H1 (cell line): ENCODE measurements at regions of chr3 and their contacts with region 1.

Region 1: DNA sequence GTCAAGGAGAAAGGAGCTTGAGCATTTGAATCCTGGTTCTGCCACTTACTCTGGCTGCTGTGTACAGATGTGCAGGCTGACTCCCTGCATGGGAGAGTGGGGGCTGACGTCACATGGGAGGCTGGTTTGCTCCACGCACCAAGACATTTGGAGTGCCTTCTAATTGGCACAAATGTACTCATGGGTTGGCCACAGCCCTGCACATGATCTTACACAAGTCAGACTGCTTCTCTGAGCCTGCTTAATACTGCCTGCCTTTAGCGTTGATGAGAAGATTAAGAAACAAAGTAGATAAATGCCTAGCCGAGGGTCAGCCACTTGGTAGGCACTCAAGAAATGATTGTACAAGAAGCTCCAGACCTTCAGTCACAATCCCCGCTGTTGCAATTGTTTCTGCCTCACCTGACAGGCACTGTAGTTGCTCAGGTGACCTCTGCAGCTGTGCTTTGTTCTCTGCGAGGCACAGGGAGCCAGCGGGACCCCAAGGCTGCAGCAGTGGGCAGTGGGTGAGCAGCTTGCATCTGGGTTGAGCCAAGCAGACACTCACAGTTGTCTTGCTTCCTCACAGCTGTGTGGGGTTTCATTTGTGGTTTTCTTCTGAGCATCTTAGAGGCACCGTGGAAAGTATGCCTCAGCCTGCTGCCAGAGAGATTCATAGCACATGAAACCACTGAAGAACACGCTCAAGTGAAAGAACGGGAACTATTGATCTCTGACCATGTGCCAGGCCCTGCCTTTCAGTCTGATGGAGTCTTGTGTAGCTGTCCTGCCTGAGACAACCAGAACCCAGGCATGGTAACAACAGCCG is 33.1 kb downstream of the GRK7 start:
- DNase-seq: no peak
- H3K4me3 ChIP-seq: no peak overlapping the region
- H3K27ac ChIP-seq: no peak overlapping the region
- H3K4me1 ChIP-seq: peaks cover 11 to 23% (median 17%) of the 10 kb centered on the region in 4 experiments
- H3K27me3 ChIP-seq: peaks cover 0 to 18% (median 11%) of the 10 kb centered on the region in 4 experiments; a peak in 5 of 7 replicates
- CTCF ChIP-seq: no peak
- EP300 ChIP-seq: no peak
- POLR2A ChIP-seq: no peak
- RAD21 ChIP-seq: no peak

Region 2: DNA sequence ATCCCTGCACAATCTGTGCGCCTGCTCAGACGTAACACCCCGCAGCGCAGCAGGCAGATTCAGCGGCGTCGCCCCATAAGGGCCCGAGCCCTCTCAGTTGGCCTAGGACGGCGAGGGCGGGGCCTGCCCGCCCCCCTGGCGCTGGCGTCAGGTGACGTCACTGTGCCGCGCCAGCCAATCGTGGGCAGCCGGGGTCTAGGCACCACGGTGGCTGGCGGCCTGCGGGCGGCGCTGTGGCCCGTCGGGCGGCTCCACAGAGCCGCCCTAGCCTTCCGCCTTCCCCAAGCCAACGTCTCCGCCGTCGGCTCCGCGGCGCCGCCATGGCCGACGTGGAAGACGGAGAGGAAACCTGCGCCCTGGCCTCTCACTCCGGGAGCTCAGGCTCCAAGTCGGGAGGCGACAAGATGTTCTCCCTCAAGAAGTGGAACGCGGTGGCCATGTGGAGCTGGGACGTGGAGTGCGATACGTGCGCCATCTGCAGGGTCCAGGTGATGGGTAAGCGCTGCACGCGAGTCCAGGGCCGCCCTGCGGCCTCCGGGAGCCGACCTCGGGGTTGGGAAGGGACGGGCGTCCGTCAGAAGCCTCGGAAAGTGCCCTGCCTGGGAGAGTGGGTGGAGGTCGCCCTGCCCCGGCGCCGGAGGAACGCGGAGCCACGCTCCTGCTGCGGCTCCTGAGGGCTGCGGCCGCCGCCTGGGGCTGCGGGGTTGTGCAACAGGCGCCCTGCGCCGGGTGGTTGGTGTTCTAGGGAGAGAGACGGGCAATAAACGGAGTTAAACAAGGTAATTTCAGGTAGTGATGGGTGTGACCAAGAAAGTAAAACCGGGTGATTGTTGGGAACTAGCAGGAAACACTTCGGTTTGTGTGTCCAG is 58.0 kb before region 1 on chr3 and contains the start of gene RNF7:
- CTCF ChIA-PET with region 1: interaction called, 13 read pairs
- POLR2A ChIA-PET with region 1: interaction called, 4 read pairs
- DNase-seq: peak; percentile 90 to 97
- H3K4me3 ChIP-seq: peak within 1 kb of the TSS; percentile 79 to 97 (median 92)
- H3K27ac ChIP-seq: peak within 1 kb of the TSS; percentile 93
- H3K4me1 ChIP-seq: peaks cover 0 to 5% (median 0%) of the 10 kb centered on the region in 4 experiments; a peak in 2 of 7 replicates
- H3K27me3 ChIP-seq: peaks cover 0 to 2% (median 0%) of the 10 kb centered on the region in 4 experiments; a peak in 1 of 7 replicates
- CTCF ChIP-seq: peak; percentile 80 to 90 (median 85)
- EP300 ChIP-seq: 0 out of 3 replicates have a peak, but pooled peaks of 1 of the 2 experiments have one; percentile 55
- POLR2A ChIP-seq: peak; percentile 77 to 80
- RAD21 ChIP-seq: peak; percentile 75 to 85
- total RNA-seq, gene RNF7: 108 and 113 TPM in 2 replicates

Region 3: DNA sequence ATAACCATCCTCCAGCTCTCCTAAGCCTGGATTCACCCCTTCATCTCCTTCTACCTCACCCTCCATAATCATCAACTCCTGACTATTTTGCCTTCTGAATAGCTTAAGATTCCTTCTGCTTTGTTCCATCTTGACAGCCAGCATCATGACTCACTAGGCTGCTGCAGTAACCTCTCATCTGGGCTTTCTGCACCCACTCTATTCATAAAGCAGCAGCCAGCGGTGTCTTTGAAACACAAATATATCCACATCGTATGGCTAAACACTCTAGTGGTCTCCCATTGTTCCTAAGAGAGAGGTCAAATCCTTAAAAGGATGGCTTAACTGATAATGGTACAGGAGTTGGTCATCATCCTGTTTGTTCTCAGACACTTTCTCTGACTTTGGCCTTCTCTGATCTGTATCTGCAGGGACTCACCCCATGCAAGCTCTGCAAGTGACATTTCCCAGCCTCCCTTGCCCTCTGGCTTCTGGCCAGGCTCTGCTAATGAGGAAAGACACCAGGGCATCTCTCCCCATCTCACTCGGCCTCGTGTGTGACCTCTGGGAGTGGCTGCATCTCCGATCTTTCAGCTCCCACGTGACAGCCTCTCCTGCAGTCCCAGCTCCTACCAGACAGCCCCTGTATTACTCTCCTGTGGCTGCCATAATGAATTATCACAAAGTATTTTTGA is 26.9 kb before region 1 on chr3:
- CTCF ChIA-PET with region 1: interaction called, 10 read pairs
- POLR2A ChIA-PET with region 1: interaction called, 3 read pairs
- DNase-seq: no peak
- H3K4me3 ChIP-seq: no peak overlapping the region
- H3K27ac ChIP-seq: no peak overlapping the region
- H3K4me1 ChIP-seq: no peaks in the 10 kb centered on the region
- H3K27me3 ChIP-seq: no peaks in the 10 kb centered on the region
- CTCF ChIP-seq: no peak
- EP300 ChIP-seq: no peak
- POLR2A ChIP-seq: no peak
- RAD21 ChIP-seq: no peak

Region 4: GRCh38 chr3:141782454-141782853 is 13.8 kb before region 1 on chr3:
- CTCF ChIA-PET with region 1: interaction called, 19 read pairs
- POLR2A ChIA-PET with region 1: interaction called, 3 read pairs
- DNase-seq: no peak
- H3K4me3 ChIP-seq: no peak overlapping the region
- H3K27ac ChIP-seq: no peak overlapping the region
- H3K4me1 ChIP-seq: no peaks in the 10 kb centered on the region
- H3K27me3 ChIP-seq: no peaks in the 10 kb centered on the region; a peak in 1 of 7 replicates
- CTCF ChIP-seq: peak; percentile 33 to 52 (median 43)
- EP300 ChIP-seq: no peak
- POLR2A ChIP-seq: no peak
- RAD21 ChIP-seq: peak; percentile 59 to 71

Region 5: DNA sequence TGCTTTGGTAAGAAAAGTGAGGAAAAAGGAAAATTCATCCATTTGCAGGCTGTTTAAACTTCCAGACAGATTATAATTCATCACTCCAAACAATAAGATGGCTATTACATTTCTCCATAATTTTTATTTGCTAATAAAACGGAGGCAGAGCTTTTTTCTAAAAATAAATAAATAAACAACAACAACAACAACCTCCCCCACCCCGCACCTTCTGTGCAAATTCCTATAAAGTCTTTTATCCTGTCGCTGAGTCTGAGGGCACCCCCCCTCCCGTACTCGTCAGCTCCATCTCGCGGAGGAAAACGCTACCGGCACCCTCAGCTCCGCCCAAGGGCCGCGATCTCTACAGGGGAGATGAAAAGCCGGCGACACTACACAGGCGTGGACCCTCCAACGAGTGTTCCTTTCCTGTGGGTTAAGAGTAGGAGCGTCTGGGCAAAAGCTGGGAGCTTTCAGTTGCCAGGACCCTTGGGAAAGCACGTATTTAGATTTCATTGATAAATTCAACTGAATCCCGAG is 79.1 kb after region 1 on chr3:
- CTCF ChIA-PET with region 1: interaction called, 11 read pairs
- POLR2A ChIA-PET with region 1: interaction called, 8 read pairs
- DNase-seq: peak; percentile 51 to 84
- H3K4me3 ChIP-seq: peak overlapping the region; percentile 71 to 97 (median 75)
- H3K27ac ChIP-seq: no peak overlapping the region; the same call in 1 of the 2 replicates
- H3K4me1 ChIP-seq: peaks cover 0 to 3% (median 0%) of the 10 kb centered on the region in 4 experiments; a peak in 1 of 7 replicates
- H3K27me3 ChIP-seq: no peaks in the 10 kb centered on the region
- CTCF ChIP-seq: peak; percentile 78 to 85 (median 82)
- EP300 ChIP-seq: no peak
- POLR2A ChIP-seq: peak in 1 of 2 experiments; percentile 33; a peak in 1 of 3 replicates
- RAD21 ChIP-seq: peak; percentile 67 to 74